HCT116 (cell line): ENCODE measurements at regions of chr11 and their contacts with region 1.

Region 1: GRCh38 chr11:47642099-47642855 is at the start of gene MTCH2:
- DNase-seq: peak; percentile 91
- ATAC-seq: peak; percentile 91
- H3K4me3 ChIP-seq: peak within 1 kb of the TSS; percentile 70 to 92
- H3K27ac ChIP-seq: peak within 1 kb of the TSS; percentile 84
- H3K4me1 ChIP-seq: peaks cover 8 to 19% of the 10 kb centered on the region in 2 experiments
- H3K27me3 ChIP-seq: no peaks in the 10 kb centered on the region
- CTCF ChIP-seq: peak in 1 of 3 experiments; percentile 18; a peak in 1 of 6 replicates
- POLR2A ChIP-seq: peak; percentile 97
- RAD21 ChIP-seq: no peak
- total RNA-seq, gene MTCH2: 138 TPM

Region 2: DNA sequence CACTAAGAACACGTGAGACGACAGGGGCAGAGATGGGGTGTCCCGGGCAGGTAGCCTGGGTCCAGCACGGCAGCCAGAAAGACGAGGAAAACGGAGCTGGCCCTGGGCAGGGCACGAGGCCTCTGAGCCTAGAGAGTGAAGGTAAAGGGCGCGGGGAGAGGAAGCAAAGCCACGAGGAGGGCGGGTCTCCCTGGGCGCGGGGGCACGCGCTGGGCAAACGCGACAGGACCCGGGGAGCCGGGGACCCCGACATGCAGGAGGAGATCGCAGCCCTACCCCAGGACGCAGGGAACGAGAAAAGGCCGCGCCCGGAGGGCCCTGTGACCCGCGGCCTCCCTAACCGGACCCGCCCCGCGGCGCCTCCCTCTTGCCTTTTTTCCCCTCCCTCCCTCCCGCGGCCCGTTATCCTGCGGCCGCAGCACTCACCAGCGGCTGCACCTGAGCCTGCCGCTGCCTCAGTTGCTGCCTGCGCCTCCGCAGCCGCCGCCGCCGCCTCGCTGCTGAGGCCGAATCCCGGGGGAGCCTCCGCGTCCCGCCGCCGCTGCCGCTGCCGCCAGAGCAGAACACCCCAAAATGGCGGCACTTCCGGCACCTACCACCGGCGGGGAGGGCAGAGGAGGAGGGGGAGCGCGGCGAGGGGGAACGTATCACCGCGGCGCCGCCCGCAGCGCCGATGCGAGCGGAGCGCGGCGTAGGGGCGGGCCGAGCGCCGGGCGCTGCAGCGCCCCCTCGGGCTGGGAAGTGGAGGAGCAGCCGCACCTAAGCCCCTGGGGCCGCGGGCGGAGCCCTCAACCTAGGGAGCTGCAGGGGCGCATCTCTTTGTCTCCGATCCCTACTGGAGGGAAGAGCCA is 89.5 kb before region 1 on chr11 and contains the start of gene CELF1:
- CTCF ChIA-PET with region 1: no interaction called
- POLR2A ChIA-PET with region 1: no interaction called
- RAD21 ChIA-PET with region 1: no interaction called
- intact Hi-C with region 1: loop called (anchors 1 kb)
- DNase-seq: peak; percentile 63
- ATAC-seq: peak; percentile 96
- H3K4me3 ChIP-seq: peak within 1 kb of the TSS; percentile 94 to 97
- H3K27ac ChIP-seq: peak within 1 kb of the TSS; percentile 93
- H3K4me1 ChIP-seq: peaks cover 13 to 25% of the 10 kb centered on the region in 2 experiments
- H3K27me3 ChIP-seq: no peaks in the 10 kb centered on the region
- CTCF ChIP-seq: peak; percentile 26 to 78 (median 76); a peak in 5 of 6 replicates
- POLR2A ChIP-seq: no peak
- RAD21 ChIP-seq: no peak
- total RNA-seq, gene CELF1: 133 TPM